GM13977 (cell line): ENCODE measurements at regions of chr12 and their contacts with region 1.

Region 1: DNA sequence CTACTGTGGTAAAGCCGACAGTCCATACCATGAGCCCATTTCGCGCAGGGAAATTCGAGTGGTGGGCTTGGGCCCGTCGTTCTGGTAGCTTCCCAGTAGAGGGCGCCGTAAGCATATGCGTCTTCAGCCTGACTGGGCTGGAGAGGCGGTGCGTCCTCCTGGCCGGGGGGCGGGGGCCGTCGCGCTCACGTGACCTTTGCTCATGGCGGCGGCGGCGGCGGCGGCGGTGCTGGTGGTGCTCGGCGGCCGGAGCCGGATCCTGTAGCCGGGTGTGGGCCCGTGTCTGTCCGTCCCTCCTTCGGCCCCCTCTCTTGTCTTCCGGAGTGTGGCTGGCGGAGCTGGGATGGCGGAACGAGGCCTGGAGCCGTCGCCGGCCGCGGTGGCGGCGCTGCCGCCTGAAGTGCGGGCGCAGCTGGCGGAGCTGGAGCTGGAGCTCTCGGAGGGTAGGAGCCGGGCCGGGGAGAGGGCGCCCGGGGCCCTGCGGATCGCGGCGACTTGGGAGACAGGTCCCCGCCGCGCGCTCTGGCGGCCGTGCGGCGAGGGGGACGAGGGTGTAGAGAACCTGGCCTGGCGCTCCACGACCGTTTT is at the start of gene DIP2B:
- DNase-seq: peak; percentile 89
- CTCF ChIP-seq: peak; percentile 96

Region 2: GRCh38 chr12:50302686-50303085 is 202.2 kb before region 1 on chr12:
- in situ Hi-C with region 1: no loop called
- DNase-seq: no peak
- CTCF ChIP-seq: no peak

Region 3: DNA sequence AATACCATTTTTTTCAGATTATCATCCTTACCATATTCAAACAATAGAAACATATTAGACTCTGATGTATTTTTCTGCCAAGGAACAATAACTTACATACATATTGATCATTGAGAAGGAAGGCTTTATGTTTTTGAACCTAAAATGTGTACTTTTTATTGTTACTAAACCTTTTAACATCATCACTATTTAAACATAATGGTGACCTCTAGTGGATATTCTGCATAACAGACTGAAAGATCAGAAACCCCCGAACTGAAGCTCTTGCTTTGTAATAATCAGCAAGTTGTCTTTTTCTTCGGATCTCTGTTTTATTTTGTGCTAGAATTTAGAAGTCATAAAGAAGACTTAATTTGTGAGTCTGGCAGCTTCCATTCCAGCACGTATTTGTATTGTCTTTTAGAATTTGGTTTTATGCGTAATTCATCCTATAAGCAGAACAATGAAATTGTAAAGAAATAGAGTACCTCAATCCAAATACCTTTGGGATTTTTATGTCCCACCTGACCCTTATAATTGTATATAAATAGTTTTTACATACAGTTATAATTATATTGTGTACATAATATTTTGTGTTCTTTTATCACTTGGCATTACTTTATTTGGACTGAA is 133.1 kb after region 1 on chr12:
- in situ Hi-C with region 1: loop called (anchors 10 kb)
- DNase-seq: peak; percentile 40
- CTCF ChIP-seq: peak; percentile 55

Region 4: GRCh38 chr12:51521554-51522276 is 1016.8 kb after region 1 on chr12:
- in situ Hi-C with region 1: no loop called
- DNase-seq: no peak
- CTCF ChIP-seq: no peak